ENCODE measurements at regions of chr5 and their contacts with region 1.

Region 1: GRCh38 chr5:43389679-43390329 is 22.4 kb downstream of the CCL28 start:
- DNase-seq: peak; percentile 79 to 91
- ATAC-seq: peak; percentile 95 to 96
- H3K4me3 ChIP-seq: no peak overlapping the region
- H3K27ac ChIP-seq: peak overlapping the region in 1 of 2 experiments; percentile 13; a peak in 1 of 6 replicates
- H3K4me1 ChIP-seq: peaks cover 8% of the 10 kb centered on the region; the same call in 1 of the 3 replicates
- CTCF ChIP-seq: peak; percentile 98
- EP300 ChIP-seq: no peak
- POLR2A ChIP-seq: no peak
- RAD21 ChIP-seq: peak; percentile 90 to 94

Region 2: DNA sequence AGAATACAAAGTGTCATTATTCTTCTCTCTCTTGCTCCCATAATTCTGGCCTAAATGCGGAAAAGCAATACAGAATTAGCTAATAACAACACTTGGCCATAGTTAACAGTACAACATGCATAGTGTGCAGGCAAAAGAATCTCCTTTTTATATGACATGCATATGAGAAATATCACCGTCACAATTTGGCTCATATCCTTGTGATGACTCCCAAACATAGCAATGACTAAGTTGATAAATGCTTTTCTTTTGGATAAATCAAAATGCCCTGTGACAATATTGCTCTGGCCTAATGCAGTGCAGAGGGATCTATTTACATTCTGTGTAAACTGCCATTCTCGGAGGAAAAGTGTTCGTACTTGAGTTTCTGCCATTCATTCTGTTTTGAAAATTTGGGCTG is 1088.5 kb before region 1 on chr5:
- CTCF ChIA-PET with region 1: no interaction called
- POLR2A ChIA-PET with region 1: no interaction called
- DNase-seq: no peak
- ATAC-seq: no peak
- H3K4me3 ChIP-seq: no peak overlapping the region
- H3K27ac ChIP-seq: no peak overlapping the region
- H3K4me1 ChIP-seq: no peaks in the 10 kb centered on the region
- CTCF ChIP-seq: no peak
- EP300 ChIP-seq: no peak
- POLR2A ChIP-seq: no peak
- RAD21 ChIP-seq: no peak

Region 3: DNA sequence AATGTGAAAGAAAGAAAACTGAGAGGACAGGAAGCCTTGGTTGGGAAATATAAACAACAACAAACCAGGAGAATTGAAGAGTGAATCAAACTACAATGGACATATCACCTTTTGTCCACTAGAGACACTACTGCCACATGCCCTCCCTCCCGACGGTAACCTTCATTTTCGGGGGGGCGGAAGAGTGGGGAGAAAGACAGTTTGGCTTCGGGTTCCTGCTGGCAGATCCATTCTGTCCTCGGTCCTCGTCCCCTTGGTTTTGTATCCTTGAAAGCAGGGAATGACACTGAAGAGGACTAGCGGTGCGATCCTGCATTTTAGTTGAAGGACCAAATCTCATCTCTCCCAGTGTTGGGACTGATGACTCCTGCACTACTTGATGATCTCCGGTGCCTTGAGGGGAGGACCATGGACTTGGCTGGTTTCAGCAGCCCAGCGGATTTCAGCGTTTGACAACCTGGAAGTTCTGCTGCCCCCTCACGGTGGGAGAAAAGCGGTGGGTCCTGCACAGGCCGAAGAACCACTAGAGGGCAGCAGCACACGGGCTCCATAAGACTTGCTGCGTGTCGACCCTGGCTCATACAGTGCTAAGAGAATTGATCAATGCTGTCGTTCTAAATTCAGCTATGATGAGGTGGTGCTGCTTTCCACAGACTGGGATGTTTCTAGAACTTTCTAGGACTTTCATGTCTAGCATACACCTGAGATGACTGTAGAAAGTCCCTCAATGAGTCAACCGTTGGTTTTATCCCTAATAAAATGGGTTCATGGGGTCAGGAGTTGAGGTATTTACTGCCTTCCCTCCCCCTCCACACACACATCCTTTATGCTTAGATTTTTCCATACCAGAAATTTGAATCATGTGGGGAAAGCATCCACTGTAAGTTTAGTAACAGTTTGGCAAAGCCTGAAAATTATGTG is 284.2 kb before region 1 on chr5:
- CTCF ChIA-PET with region 1: interaction called, 24 read pairs
- POLR2A ChIA-PET with region 1: no interaction called
- DNase-seq: peak; percentile 80 to 98
- ATAC-seq: peak; percentile 96 to 98
- H3K4me3 ChIP-seq: peak overlapping the region; percentile 50
- H3K27ac ChIP-seq: peak overlapping the region; percentile 75 to 82
- H3K4me1 ChIP-seq: 0 out of 3 replicates have a peak, but pooled peaks cover 3% of the 10 kb centered on the region
- CTCF ChIP-seq: peak; percentile 100
- EP300 ChIP-seq: no peak
- POLR2A ChIP-seq: no peak
- RAD21 ChIP-seq: peak; percentile 83 to 84

Region 4: GRCh38 chr5:43227655-43228054 is 162.1 kb before region 1 on chr5:
- CTCF ChIA-PET with region 1: interaction called, 41 read pairs
- POLR2A ChIA-PET with region 1: no interaction called
- DNase-seq: peak; percentile 60 to 71
- ATAC-seq: peak; percentile 73
- H3K4me3 ChIP-seq: no peak overlapping the region
- H3K27ac ChIP-seq: no peak overlapping the region
- H3K4me1 ChIP-seq: no peaks in the 10 kb centered on the region
- CTCF ChIP-seq: peak; percentile 70
- EP300 ChIP-seq: no peak
- POLR2A ChIP-seq: no peak
- RAD21 ChIP-seq: peak; percentile 72 to 77

Region 5: GRCh38 chr5:43294226-43294625 is 95.6 kb before region 1 on chr5:
- CTCF ChIA-PET with region 1: interaction called, 16 read pairs
- POLR2A ChIA-PET with region 1: no interaction called
- DNase-seq: no peak
- ATAC-seq: no peak
- H3K4me3 ChIP-seq: no peak overlapping the region
- H3K27ac ChIP-seq: no peak overlapping the region
- H3K4me1 ChIP-seq: no peaks in the 10 kb centered on the region
- CTCF ChIP-seq: no peak
- EP300 ChIP-seq: no peak
- POLR2A ChIP-seq: no peak
- RAD21 ChIP-seq: no peak

Region 6: DNA sequence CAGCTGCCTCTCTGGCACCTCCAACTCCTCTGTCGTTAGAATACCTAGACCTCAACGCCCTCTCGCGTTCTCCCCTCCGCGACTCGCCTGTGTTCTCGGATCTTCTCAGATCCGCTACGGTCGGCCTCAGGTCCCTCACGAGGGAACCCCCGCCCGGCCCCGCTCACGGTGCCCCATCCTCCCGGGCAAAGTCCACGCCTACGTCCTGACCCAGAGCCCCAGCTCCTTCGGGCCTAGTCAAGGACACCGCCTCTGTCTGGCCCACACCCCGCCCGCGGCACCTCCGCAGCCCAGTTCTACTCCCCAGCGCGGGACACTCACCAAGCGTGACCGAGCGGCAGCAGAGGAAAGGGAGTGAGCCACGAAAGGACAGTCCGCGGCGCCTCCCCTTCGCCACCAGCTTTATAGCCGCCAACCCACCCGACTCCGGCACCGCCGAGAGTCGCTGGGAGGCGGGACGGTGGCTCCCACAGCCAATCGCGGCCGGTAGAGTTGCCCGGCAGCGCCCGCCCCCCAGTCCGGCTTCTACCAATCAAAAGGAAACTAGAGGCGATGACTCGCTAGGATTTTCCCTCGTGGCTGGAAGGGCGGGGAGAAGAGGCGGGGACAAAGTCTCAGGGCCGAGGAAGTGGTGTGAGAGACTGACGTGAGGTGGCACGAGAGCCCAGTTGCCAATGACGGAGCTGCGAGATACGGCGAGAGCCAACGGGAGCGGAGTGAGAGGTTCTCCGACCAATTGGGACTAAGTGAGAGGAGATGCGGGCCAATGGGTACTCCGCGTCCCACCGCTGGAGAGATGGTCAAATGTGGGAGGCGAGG is 76.6 kb before region 1 on chr5 and contains the start of gene HMGCS1:
- CTCF ChIA-PET with region 1: interaction called, 32 read pairs
- POLR2A ChIA-PET with region 1: interaction called, 4 read pairs
- DNase-seq: peak; percentile 98 to 100
- ATAC-seq: peak; percentile 95 to 96
- H3K4me3 ChIP-seq: peak within 1 kb of the TSS; percentile 88
- H3K27ac ChIP-seq: peak within 1 kb of the TSS; percentile 87 to 90
- H3K4me1 ChIP-seq: peaks cover 59% of the 10 kb centered on the region
- CTCF ChIP-seq: no peak
- EP300 ChIP-seq: no peak
- POLR2A ChIP-seq: peak; percentile 93
- RAD21 ChIP-seq: no peak
- polyA plus RNA-seq, gene HMGCS1: 54.1 and 72.8 TPM in 2 replicates

Region 7: DNA sequence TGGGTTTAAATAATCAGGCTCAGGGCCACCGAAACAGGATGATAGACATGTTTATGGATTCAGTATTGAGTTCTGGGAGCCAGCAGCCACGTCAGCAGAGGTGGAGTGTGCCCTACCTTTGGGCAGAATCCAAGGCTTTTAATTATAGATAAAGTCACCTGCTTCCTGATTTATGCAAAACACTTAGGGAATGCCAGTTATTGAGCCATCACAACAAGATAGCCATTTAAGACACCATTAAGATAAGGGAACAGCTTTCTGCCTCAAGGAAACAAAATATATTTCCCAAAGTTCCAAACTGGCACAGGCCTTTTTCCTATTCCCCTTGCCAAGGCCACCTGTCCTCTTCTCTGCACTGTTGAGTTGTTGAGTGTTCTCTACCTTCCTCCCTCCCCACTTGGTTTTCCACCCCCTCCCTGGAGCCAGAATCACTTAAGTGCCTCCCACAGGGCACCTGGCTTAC is 20.0 kb after region 1 on chr5:
- CTCF ChIA-PET with region 1: interaction called, 16 read pairs
- POLR2A ChIA-PET with region 1: no interaction called
- DNase-seq: no peak
- ATAC-seq: no peak
- H3K4me3 ChIP-seq: no peak overlapping the region
- H3K27ac ChIP-seq: no peak overlapping the region
- H3K4me1 ChIP-seq: no peaks in the 10 kb centered on the region
- CTCF ChIP-seq: no peak
- EP300 ChIP-seq: no peak
- POLR2A ChIP-seq: no peak
- RAD21 ChIP-seq: no peak